AG04450 (cell line): ENCODE measurements at regions of chr1 and their contacts with region 1.

Region 1: DNA sequence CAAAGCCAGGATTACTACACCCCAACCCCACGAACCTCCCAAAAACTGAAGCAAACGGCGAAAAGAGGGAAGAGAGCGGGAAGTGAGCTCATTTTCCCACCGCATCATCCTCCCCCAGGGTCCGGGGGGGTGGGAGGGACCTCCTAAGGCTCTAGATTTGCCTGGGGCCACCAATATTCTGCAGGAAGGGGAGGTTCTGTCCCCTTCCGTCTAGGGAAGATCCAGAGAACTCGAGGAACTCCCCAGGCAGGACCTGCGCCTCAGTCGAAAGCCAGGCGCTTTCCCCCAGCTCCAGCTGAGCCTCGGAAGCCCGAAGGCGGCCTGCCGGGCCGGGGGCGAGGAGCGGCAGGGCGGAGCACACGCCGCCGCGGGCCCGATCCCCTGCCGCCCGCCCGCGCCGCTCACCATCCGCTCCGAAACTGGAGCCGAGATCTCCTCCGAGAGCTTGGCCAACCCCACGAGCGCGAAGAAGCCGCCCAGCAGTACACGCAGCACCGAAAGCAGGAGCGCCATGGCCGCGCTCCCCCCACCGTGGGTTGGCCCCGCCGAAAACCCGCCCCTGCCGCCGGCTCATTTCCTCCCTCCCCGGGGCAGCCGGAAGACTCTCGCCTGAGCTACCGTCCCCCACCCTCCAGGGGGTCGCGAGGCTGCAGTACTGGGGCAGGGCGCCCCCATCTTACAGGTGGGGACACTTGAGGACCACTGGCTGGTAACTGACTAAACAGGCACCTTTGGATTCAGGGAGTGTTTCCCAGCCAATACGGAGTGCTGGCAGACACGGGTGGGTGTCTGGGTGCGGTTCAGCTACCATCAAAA is at the start of gene TMEM35B:
- DNase-seq: no peak
- H3K4me3 ChIP-seq: peak within 1 kb of the TSS; percentile 84
- H3K27ac ChIP-seq: peak within 1 kb of the TSS; percentile 71
- H3K27me3 ChIP-seq: no peaks in the 10 kb centered on the region
- CTCF ChIP-seq: peak; percentile 28
- polyA plus RNA-seq, gene TMEM35B: 36.8 and 37.8 TPM in 2 replicates

Region 2: DNA sequence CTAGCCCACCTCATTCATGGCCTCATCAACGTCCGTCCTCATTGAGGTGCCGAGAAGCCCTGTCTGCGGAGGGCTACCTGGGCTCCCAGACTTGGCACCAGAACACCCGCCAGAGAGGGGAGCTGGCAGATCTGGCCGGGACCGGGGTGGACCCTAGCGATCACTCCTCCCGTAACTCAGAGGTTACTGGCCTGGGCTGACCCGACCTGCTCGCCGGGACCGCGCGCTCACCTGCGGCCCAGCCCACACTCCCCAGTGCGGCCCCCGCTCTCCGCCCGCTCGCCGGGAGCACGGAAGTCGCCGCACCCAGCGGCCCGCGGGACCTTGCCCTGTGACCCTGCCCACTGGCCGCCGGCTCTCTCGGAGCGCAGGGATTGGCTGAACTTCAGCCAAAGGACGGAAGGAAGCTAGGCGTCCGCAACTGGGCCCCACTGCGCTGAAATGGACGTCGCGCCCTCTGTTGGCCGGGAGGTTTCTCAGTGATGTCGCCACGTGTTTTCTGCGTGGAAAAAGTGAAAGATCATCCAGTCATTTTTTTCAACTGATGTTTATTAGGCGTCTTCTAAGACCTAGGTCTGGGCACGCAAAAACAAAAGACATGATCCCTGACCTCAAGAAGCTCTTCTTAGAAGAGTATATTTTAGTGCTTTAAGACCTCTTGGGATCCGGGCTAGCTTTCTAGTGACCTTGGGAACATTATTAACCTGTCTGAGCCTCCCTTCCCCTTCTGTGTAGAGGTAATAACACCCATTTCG is 125.4 kb before region 1 on chr1 and contains the start of gene SMIM12:
- CTCF ChIA-PET with region 1: interaction called, 18 read pairs
- POLR2A ChIA-PET with region 1: interaction called, 3 read pairs
- DNase-seq: peak; percentile 78
- H3K4me3 ChIP-seq: peak within 1 kb of the TSS; percentile 96
- H3K27ac ChIP-seq: peak within 1 kb of the TSS; percentile 47
- H3K27me3 ChIP-seq: peaks cover 6% of the 10 kb centered on the region
- CTCF ChIP-seq: peak; percentile 88
- polyA plus RNA-seq, gene SMIM12: 41.7 and 46.1 TPM in 2 replicates

Region 3: GRCh38 chr1:35073265-35073811 is 88.3 kb after region 1 on chr1:
- CTCF ChIA-PET with region 1: no interaction called
- POLR2A ChIA-PET with region 1: interaction called, 16 read pairs
- DNase-seq: no peak
- H3K4me3 ChIP-seq: no peak overlapping the region
- H3K27ac ChIP-seq: no peak overlapping the region
- H3K27me3 ChIP-seq: peaks cover 5% of the 10 kb centered on the region
- CTCF ChIP-seq: no peak

Region 4: GRCh38 chr1:35475856-35476674 is 491.1 kb after region 1 on chr1:
- CTCF ChIA-PET with region 1: no interaction called
- POLR2A ChIA-PET with region 1: no interaction called
- DNase-seq: no peak
- H3K4me3 ChIP-seq: no peak overlapping the region
- H3K27ac ChIP-seq: no peak overlapping the region
- H3K27me3 ChIP-seq: no peaks in the 10 kb centered on the region
- CTCF ChIP-seq: no peak

Region 5: GRCh38 chr1:36306902-36307456 is 1322.0 kb after region 1 on chr1:
- CTCF ChIA-PET with region 1: no interaction called
- POLR2A ChIA-PET with region 1: no interaction called
- DNase-seq: peak; percentile 76
- H3K4me3 ChIP-seq: peak overlapping the region; percentile 75
- H3K27ac ChIP-seq: no peak overlapping the region
- H3K27me3 ChIP-seq: no peaks in the 10 kb centered on the region
- CTCF ChIP-seq: no peak